Calu3 (cell line): ENCODE measurements at regions of chr17 and their contacts with region 1.

Region 1: GRCh38 chr17:27494192-27495091 is 38.2 kb downstream of the KSR1 start:
- DNase-seq: peak; percentile 76
- H3K4me3 Mint-ChIP-seq: peak overlapping the region; percentile 68
- H3K27ac Mint-ChIP-seq: peak overlapping the region; percentile 75
- H3K4me1 Mint-ChIP-seq: peaks cover 30% of the 10 kb centered on the region
- H3K27me3 Mint-ChIP-seq: no peaks in the 10 kb centered on the region
- CTCF ChIP-seq: no peak

Region 2: DNA sequence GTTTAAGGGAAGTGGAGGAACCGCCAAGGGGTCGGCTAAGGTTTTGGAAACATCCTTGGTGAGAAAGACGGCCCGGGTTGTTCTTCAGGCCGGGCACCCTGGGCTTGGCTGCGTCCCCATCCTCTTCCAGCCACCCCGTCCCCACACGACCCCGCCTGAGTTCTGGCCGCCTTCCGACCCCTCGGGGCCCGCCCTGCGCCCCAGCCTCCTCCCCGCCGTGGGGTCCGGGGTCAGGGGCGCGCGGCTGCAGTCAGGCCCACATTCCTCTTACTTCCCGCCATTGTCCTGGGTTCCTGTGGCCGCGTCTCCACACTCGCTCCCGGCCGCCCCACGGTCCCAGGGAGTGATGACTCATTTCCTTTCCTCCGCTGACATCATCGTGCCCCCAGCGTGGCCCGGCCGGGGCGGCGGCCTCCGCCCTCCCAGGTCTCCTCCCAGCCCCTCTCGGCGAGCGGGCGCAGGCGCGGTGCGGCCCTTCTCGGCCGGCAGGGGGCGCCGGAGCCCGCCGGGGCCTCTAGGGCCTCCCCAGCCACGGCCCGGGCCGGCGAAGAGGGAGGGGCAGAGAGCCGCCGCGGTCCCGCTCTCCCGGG is 140.9 kb before region 1 on chr17:
- CTCF ChIA-PET with region 1: interaction called, 4 read pairs
- intact Hi-C with region 1: loop called (anchors 10 kb)
- DNase-seq: peak; percentile 95
- H3K4me3 Mint-ChIP-seq: peak overlapping the region; percentile 84
- H3K27ac Mint-ChIP-seq: peak overlapping the region; percentile 99
- H3K4me1 Mint-ChIP-seq: peaks cover 16% of the 10 kb centered on the region
- H3K27me3 Mint-ChIP-seq: no peaks in the 10 kb centered on the region
- CTCF ChIP-seq: peak; percentile 92

Region 3: GRCh38 chr17:27455914-27456680 is 38.3 kb before region 1 on chr17 and contains the start of gene KSR1:
- CTCF ChIA-PET with region 1: no interaction called
- intact Hi-C with region 1: loop called (anchors 5 kb)
- DNase-seq: peak; percentile 82
- H3K4me3 Mint-ChIP-seq: peak within 1 kb of the TSS; percentile 72
- H3K27ac Mint-ChIP-seq: no peak within 1 kb of the TSS
- H3K4me1 Mint-ChIP-seq: peaks cover 18% of the 10 kb centered on the region
- H3K27me3 Mint-ChIP-seq: peaks cover 64% of the 10 kb centered on the region
- CTCF ChIP-seq: no peak
- total RNA-seq, gene KSR1: 3.6 and 4.5 TPM in 2 replicates

Region 4: GRCh38 chr17:27481327-27481726 is 13.1 kb before region 1 on chr17:
- CTCF ChIA-PET with region 1: no interaction called
- intact Hi-C with region 1: no loop called
- DNase-seq: no peak
- H3K4me3 Mint-ChIP-seq: no peak overlapping the region
- H3K27ac Mint-ChIP-seq: no peak overlapping the region
- H3K4me1 Mint-ChIP-seq: no peaks in the 10 kb centered on the region
- H3K27me3 Mint-ChIP-seq: no peaks in the 10 kb centered on the region
- CTCF ChIP-seq: no peak

Region 5: GRCh38 chr17:27593232-27593856 is 98.9 kb after region 1 on chr17:
- CTCF ChIA-PET with region 1: no interaction called
- intact Hi-C with region 1: no loop called
- DNase-seq: no peak
- H3K4me3 Mint-ChIP-seq: no peak overlapping the region
- H3K27ac Mint-ChIP-seq: no peak overlapping the region
- H3K4me1 Mint-ChIP-seq: no peaks in the 10 kb centered on the region
- H3K27me3 Mint-ChIP-seq: no peaks in the 10 kb centered on the region
- CTCF ChIP-seq: no peak

Region 6: GRCh38 chr17:27666831-27667560 is 172.6 kb after region 1 on chr17:
- CTCF ChIA-PET with region 1: no interaction called
- intact Hi-C with region 1: no loop called
- DNase-seq: no peak
- H3K4me3 Mint-ChIP-seq: no peak overlapping the region
- H3K27ac Mint-ChIP-seq: no peak overlapping the region
- H3K4me1 Mint-ChIP-seq: no peaks in the 10 kb centered on the region
- H3K27me3 Mint-ChIP-seq: peaks cover 74% of the 10 kb centered on the region
- CTCF ChIP-seq: no peak